Aorta (tissue), 5 donors: ENCODE measurements at regions of chr2 and their contacts with region 1.

Region 1: DNA sequence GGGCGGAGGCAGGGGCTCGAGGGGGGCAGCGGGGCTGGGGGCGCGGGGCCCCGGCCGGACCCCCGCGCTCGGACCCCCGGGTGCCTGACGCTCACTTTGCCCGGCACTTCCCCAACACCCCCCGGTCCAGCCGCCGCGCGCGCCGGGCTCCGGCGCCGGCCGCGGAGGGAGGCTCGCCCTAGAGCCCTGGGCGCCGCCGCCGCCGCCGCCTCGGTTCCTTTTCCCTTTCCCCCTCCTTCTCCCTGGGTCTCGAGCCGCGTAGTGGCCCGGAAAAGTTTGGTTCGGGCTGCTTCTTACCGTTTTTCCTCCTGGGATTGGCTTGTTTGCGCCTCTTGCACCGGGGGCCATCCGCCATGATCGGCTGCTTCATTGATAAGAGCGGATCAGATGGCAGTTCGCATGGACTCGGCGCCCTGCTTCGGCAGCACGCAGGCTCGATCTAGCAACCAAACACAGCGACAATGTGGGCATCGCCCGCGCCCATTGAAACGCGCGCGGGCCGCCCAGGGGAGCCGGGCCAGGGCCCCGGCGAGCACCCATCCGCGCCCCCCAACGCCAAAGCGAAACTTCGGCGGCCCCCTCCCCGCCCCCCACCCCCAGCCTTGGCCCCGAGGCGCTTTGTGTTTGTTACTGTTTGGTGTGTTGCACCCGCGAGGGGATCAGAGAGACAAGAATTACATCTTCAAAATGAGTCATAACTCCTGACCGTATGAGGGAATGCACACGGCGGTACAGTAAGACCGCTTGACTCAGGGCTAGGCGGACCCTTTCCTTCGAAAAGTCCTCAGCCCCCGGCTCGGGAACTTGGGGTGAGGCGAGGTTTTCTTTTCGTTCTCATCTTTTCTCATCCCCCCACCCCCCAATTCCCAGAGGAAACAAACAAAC is 2.7 kb downstream of the ZEB2 start:
- DNase-seq: peak; percentile 73 to 84
- ATAC-seq: peak; percentile 64
- H3K4me3 ChIP-seq: peak overlapping the region; percentile 100
- H3K27ac ChIP-seq: peak overlapping the region; percentile 91 to 100
- H3K4me1 ChIP-seq: peaks cover 0 to 5% of the 10 kb centered on the region in 2 donors
- H3K27me3 ChIP-seq: no peaks in the 10 kb centered on the region

Region 2: GRCh38 chr2:143513081-143513480 is 1004.1 kb before region 1 on chr2:
- intact Hi-C with region 1: loop called in 1 of 2 experiments (anchors 10 kb)
- DNase-seq: peak in 1 of 2 donors; percentile 47
- ATAC-seq: peak; percentile 85
- H3K4me3 ChIP-seq: no peak overlapping the region
- H3K27ac ChIP-seq: no peak overlapping the region
- H3K4me1 ChIP-seq: no peaks in the 10 kb centered on the region
- H3K27me3 ChIP-seq: no peaks in the 10 kb centered on the region

Region 3: DNA sequence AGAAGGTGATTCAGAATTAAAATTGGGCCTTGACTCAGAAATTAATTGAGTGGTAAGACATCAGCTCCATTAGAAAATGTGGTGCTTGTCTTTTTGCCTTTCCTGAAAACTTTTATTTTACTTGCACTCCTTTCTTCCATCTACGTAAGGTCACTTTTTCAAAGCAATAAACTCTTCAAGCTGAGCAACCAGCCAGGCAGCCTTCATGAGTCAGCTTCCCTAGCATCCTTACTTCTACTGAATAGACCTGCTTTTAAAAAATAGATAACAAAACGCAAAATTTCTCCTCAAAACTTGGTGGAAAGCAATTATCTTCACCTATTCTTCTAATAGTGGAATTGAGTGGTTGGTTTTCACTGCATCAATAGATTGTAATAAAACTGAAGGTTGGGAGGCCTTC is 883.8 kb before region 1 on chr2:
- intact Hi-C with region 1: no loop called
- DNase-seq: no peak
- ATAC-seq: no peak
- H3K4me3 ChIP-seq: no peak overlapping the region
- H3K27ac ChIP-seq: no peak overlapping the region
- H3K4me1 ChIP-seq: peaks cover 0 to 1% of the 10 kb centered on the region in 2 donors
- H3K27me3 ChIP-seq: no peaks in the 10 kb centered on the region

Region 4: DNA sequence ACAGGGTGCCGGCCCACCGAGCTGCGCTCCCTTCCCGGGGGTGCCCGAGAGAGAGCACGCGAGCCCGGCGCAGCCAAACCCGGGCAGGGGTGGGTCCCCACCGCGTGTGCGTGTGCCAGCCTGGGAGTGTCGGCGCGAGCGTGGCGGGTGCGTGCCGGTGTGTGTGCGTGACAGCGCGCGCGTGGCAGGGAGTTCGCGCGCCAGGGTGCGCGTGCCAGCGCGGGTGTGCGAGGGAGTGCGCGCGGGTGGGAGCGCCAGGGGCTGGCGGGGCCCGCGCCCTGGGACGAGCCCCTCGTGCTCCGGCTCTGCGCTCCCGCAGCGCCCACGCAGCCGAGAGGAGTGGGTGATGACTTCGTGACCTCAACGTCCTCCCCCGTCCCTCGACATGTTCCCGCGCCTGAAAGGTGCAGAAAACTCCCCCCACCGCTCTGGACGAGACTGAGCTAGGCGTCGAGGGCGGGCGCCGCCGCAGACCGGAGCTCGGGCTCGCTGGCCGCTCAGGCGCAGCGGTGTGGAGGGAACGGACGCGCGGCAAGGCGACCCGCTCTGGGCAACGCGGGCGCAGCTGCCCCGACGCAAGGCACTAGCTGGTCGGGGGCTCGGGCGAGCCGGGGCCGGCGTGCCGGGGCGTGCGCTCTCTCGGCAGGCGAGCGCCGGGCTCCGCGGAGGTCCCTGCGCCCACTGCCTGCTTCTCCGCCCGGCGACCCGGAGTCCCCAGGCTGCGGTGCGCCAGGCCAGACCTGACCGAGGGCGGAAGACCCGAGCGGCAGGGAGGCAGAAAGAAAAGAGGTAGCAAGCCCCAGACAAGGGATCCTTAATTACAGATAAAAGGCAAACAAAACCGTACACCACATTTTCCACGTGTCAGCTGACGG is 580.1 kb before region 1 on chr2:
- intact Hi-C with region 1: loop called in 1 of 2 experiments (anchors 10 kb)
- DNase-seq: peak; percentile 56 to 81
- ATAC-seq: peak; percentile 71
- H3K4me3 ChIP-seq: peak overlapping the region; percentile 42 to 62
- H3K27ac ChIP-seq: no peak overlapping the region
- H3K4me1 ChIP-seq: peaks cover 0 to 2% of the 10 kb centered on the region in 2 donors
- H3K27me3 ChIP-seq: no peaks in the 10 kb centered on the region

Region 5: GRCh38 chr2:144357623-144358373 is 159.4 kb before region 1 on chr2:
- intact Hi-C with region 1: loop called in 1 of 2 experiments (anchors 10 kb)
- DNase-seq: no peak
- ATAC-seq: peak; percentile 79
- H3K4me3 ChIP-seq: no peak overlapping the region
- H3K27ac ChIP-seq: no peak overlapping the region
- H3K4me1 ChIP-seq: peaks cover 3 to 6% of the 10 kb centered on the region in 2 donors
- H3K27me3 ChIP-seq: no peaks in the 10 kb centered on the region

Region 6: GRCh38 chr2:144596073-144596871 is 79.0 kb after region 1 on chr2:
- intact Hi-C with region 1: loop called in 1 of 2 experiments (anchors 5 kb)
- DNase-seq: no peak
- ATAC-seq: no peak
- H3K4me3 ChIP-seq: peak overlapping the region in 1 of 2 donors; percentile 48
- H3K27ac ChIP-seq: peak overlapping the region; percentile 63 to 79
- H3K4me1 ChIP-seq: peaks cover 0 to 2% of the 10 kb centered on the region in 2 donors
- H3K27me3 ChIP-seq: peaks cover 0 to 1% of the 10 kb centered on the region in 2 donors

Region 7: GRCh38 chr2:144937910-144938709 is 420.9 kb after region 1 on chr2:
- intact Hi-C with region 1: loop called in 1 of 2 experiments (anchors 5 kb)
- DNase-seq: no peak
- ATAC-seq: peak; percentile 80
- H3K4me3 ChIP-seq: no peak overlapping the region
- H3K27ac ChIP-seq: peak overlapping the region; percentile 40 to 93
- H3K4me1 ChIP-seq: peaks cover 7 to 15% of the 10 kb centered on the region in 2 donors
- H3K27me3 ChIP-seq: no peaks in the 10 kb centered on the region

Region 8: GRCh38 chr2:145752091-145752806 is 1235.0 kb after region 1 on chr2:
- intact Hi-C with region 1: loop called (anchors 10 kb)
- DNase-seq: peak in 1 of 2 donors; percentile 44
- ATAC-seq: peak; percentile 86
- H3K4me3 ChIP-seq: no peak overlapping the region
- H3K27ac ChIP-seq: peak overlapping the region in 1 of 2 donors; percentile 82
- H3K4me1 ChIP-seq: peaks cover 6 to 9% of the 10 kb centered on the region in 2 donors
- H3K27me3 ChIP-seq: no peaks in the 10 kb centered on the region